Breast epithelium (tissue), 4 donors: ENCODE measurements at regions of chr13 and their contacts with region 1.

Region 1: DNA sequence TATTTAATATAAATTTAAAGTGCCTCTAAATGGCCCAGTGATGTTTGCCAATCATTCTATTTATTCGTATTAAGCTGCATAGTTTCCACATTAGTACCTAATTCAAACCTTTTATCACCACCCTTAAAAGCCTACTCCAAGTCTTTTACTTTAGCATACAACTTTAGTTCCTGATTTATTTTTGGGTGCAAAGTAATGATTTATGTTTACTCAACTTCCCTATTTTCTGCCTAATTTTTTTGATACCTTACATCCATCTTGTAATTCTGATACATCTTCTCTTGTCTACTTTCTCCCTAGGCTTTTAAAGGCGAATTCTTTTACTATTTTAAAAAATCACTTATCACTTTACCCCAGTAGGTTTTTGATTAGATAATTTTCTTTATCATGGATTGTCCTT is 2651.1 kb upstream of the PCDH20 start:
- DNase-seq: no peak
- H3K4me3 ChIP-seq: no peak overlapping the region
- H3K27ac ChIP-seq: no peak overlapping the region
- H3K4me1 ChIP-seq: no peaks in the 10 kb centered on the region
- H3K27me3 ChIP-seq: no peaks in the 10 kb centered on the region
- CTCF ChIP-seq: no peak
- POLR2A ChIP-seq: no peak

Region 2: DNA sequence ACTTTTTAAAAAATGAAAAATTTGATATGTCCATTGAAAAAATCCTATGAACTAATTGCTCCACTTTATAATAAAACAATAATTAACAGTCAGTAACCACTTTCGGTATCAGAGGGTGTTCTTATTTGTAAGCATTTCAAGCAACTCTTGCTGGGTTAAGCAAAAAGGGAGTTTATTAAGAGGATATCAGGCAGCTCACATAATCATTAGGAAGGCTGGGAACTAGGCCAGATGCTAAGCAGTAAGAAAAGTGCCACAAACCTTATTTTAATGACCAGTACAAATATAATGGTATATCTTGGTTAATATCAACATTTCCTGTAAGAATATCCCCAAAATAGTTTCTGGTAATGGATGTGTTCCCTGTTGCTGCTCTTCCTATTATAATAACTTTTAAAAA is 32.8 kb before region 1 on chr13:
- intact Hi-C with region 1: loop called (anchors 2 kb)
- DNase-seq: no peak
- H3K4me3 ChIP-seq: no peak overlapping the region
- H3K27ac ChIP-seq: no peak overlapping the region
- H3K4me1 ChIP-seq: no peaks in the 10 kb centered on the region
- H3K27me3 ChIP-seq: no peaks in the 10 kb centered on the region
- CTCF ChIP-seq: no peak
- POLR2A ChIP-seq: no peak

Region 3: DNA sequence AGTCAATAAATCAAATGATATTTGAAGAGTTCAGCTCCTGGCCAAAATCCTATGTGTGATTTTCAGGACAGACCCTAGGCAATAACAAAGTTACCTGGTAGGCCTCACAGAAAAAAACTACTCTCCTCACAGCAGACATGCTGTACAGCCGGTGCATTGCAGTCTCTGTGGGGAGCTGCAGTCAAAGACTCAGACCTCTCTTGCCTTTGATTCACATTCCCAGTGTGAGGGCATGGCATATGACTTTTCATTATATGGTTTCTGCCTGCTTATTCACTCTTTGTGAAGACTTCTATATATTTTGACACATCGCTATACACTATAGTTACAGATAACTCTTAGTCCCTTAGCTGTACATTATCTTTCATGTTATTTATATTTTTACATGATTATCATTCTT is 33.3 kb after region 1 on chr13:
- intact Hi-C with region 1: no loop called
- DNase-seq: no peak
- H3K4me3 ChIP-seq: no peak overlapping the region
- H3K27ac ChIP-seq: no peak overlapping the region
- H3K4me1 ChIP-seq: no peaks in the 10 kb centered on the region
- H3K27me3 ChIP-seq: no peaks in the 10 kb centered on the region
- CTCF ChIP-seq: no peak
- POLR2A ChIP-seq: no peak

Region 4: DNA sequence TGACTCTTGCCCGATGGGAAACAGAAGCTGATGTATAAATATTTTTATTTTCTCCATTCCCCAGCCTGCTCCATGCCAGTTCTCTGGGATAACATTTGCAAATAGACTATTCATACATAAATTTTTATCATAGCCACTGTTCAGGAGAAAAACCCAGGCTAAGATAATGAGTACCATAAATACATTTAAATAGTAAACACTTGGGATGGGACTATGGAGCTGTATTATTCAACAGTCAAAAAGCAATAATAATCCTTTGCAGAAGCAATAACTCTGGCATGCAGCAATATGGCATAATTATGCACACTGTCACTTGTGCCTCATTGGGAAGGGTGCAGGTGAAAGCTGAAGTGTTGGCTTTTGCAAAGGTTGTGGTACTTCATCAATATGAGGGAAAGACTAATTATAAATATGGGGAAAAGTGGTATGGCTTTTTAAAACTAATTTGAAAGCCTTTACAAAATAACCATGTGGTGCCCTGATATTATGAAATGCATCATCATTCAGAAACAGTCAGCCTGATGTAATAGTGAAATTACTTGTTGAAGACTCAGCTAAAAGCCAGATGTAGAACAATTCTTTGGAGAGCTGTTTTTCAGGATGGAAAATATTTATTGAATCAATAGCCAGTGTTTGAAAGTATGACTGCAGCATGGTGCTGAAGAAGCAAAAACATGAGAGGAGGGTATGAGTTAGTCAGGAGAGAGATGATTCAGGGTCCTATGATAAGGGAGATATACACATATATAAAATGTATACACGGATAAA is 686.7 kb after region 1 on chr13:
- intact Hi-C with region 1: no loop called
- DNase-seq: no peak
- H3K4me3 ChIP-seq: no peak overlapping the region
- H3K27ac ChIP-seq: no peak overlapping the region
- H3K4me1 ChIP-seq: no peaks in the 10 kb centered on the region
- H3K27me3 ChIP-seq: no peaks in the 10 kb centered on the region
- CTCF ChIP-seq: no peak
- POLR2A ChIP-seq: no peak